IMR-90 (cell line): ENCODE measurements at regions of chr3 and their contacts with region 1.

Region 1: DNA sequence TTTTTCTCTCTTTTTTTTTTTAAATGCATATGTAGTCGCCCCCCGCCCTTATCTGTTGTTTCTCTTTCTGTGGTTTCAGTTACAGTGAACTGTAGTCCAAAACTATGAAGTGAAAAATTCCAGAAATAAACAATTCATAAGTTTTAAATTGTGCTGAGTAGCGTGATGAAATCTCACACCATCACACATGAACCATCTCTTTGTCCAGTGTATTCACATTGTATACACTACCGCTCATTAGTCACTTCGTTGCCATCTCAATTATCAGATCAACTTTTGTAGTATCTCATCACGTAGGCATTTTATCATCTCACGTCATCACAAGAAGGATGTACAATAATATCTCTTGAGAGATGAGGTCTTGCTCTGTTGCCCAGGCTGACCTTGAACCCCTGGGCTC is 62.5 kb upstream of the MLF1 start:
- DNase-seq: peak; percentile 89
- ATAC-seq: peak; percentile 87
- H3K4me3 ChIP-seq: no peak overlapping the region
- H3K27ac ChIP-seq: peak overlapping the region; percentile 46; the same call in 1 of the 2 replicates
- H3K4me1 ChIP-seq: peaks cover 5% of the 10 kb centered on the region
- H3K27me3 ChIP-seq: no peaks in the 10 kb centered on the region
- CTCF ChIP-seq: no peak
- POLR2A ChIP-seq: no peak
- RAD21 ChIP-seq: no peak

Region 2: GRCh38 chr3:158405507-158405906 is 103.0 kb before region 1 on chr3:
- CTCF ChIA-PET with region 1: no interaction called
- POLR2A ChIA-PET with region 1: no interaction called
- dilution Hi-C with region 1: no loop called
- in situ Hi-C with region 1: no loop called
- intact Hi-C with region 1: no loop called
- DNase-seq: no peak
- ATAC-seq: no peak
- H3K4me3 ChIP-seq: no peak overlapping the region
- H3K27ac ChIP-seq: no peak overlapping the region
- H3K4me1 ChIP-seq: no peaks in the 10 kb centered on the region
- H3K27me3 ChIP-seq: no peaks in the 10 kb centered on the region
- CTCF ChIP-seq: no peak
- POLR2A ChIP-seq: no peak
- RAD21 ChIP-seq: no peak

Region 3: GRCh38 chr3:158471639-158472294 is 36.7 kb before region 1 on chr3:
- CTCF ChIA-PET with region 1: no interaction called
- POLR2A ChIA-PET with region 1: no interaction called
- dilution Hi-C with region 1: no loop called
- in situ Hi-C with region 1: no loop called
- intact Hi-C with region 1: loop called (anchors 5 kb)
- DNase-seq: peak; percentile 97
- ATAC-seq: peak; percentile 90
- H3K4me3 ChIP-seq: no peak overlapping the region
- H3K27ac ChIP-seq: no peak overlapping the region
- H3K4me1 ChIP-seq: peaks cover 3% of the 10 kb centered on the region; the same call in 1 of the 2 replicates
- H3K27me3 ChIP-seq: no peaks in the 10 kb centered on the region
- CTCF ChIP-seq: no peak
- POLR2A ChIP-seq: no peak
- RAD21 ChIP-seq: no peak

Region 4: GRCh38 chr3:158522221-158523136 is 14.0 kb after region 1 on chr3:
- CTCF ChIA-PET with region 1: interaction called, 3 read pairs
- POLR2A ChIA-PET with region 1: no interaction called
- dilution Hi-C with region 1: no loop called
- in situ Hi-C with region 1: no loop called
- intact Hi-C with region 1: loop called (anchors 2 kb)
- DNase-seq: peak; percentile 69
- ATAC-seq: no peak; the same call in 1 of the 2 replicates
- H3K4me3 ChIP-seq: no peak overlapping the region
- H3K27ac ChIP-seq: no peak overlapping the region
- H3K4me1 ChIP-seq: peaks cover 3% of the 10 kb centered on the region
- H3K27me3 ChIP-seq: no peaks in the 10 kb centered on the region
- CTCF ChIP-seq: no peak
- POLR2A ChIP-seq: no peak
- RAD21 ChIP-seq: no peak

Region 5: GRCh38 chr3:158570999-158571974 is 62.8 kb after region 1 on chr3 and contains the start of gene MLF1:
- CTCF ChIA-PET with region 1: no interaction called
- POLR2A ChIA-PET with region 1: no interaction called
- dilution Hi-C with region 1: no loop called
- in situ Hi-C with region 1: no loop called
- intact Hi-C with region 1: loop called (anchors 1 kb)
- DNase-seq: peak; percentile 93
- ATAC-seq: peak; percentile 100
- H3K4me3 ChIP-seq: peak within 1 kb of the TSS; percentile 52
- H3K27ac ChIP-seq: 0 out of 2 replicates have a peak within 1 kb of the TSS, but pooled peaks have one; percentile 1
- H3K4me1 ChIP-seq: no peaks in the 10 kb centered on the region
- H3K27me3 ChIP-seq: no peaks in the 10 kb centered on the region
- CTCF ChIP-seq: no peak
- POLR2A ChIP-seq: peak; percentile 95
- RAD21 ChIP-seq: no peak
- total RNA-seq, gene MLF1: 5.2 and 7.5 TPM in 2 replicates

Region 6: GRCh38 chr3:158644345-158644908 is 135.9 kb after region 1 on chr3 and contains the start of gene GFM1:
- CTCF ChIA-PET with region 1: no interaction called
- POLR2A ChIA-PET with region 1: no interaction called
- dilution Hi-C with region 1: no loop called
- in situ Hi-C with region 1: no loop called
- intact Hi-C with region 1: no loop called
- DNase-seq: peak; percentile 94
- ATAC-seq: peak; percentile 99
- H3K4me3 ChIP-seq: peak within 1 kb of the TSS; percentile 81
- H3K27ac ChIP-seq: peak within 1 kb of the TSS; percentile 56
- H3K4me1 ChIP-seq: no peaks in the 10 kb centered on the region
- H3K27me3 ChIP-seq: no peaks in the 10 kb centered on the region
- CTCF ChIP-seq: peak; percentile 96
- POLR2A ChIP-seq: peak; percentile 80; the same call in 1 of the 2 replicates
- RAD21 ChIP-seq: peak; percentile 61
- total RNA-seq, gene GFM1: 36.0 and 55.0 TPM in 2 replicates